Gastrocnemius medialis (tissue), 4 donors: ENCODE measurements at regions of chr1 and their contacts with region 1.

Region 1: DNA sequence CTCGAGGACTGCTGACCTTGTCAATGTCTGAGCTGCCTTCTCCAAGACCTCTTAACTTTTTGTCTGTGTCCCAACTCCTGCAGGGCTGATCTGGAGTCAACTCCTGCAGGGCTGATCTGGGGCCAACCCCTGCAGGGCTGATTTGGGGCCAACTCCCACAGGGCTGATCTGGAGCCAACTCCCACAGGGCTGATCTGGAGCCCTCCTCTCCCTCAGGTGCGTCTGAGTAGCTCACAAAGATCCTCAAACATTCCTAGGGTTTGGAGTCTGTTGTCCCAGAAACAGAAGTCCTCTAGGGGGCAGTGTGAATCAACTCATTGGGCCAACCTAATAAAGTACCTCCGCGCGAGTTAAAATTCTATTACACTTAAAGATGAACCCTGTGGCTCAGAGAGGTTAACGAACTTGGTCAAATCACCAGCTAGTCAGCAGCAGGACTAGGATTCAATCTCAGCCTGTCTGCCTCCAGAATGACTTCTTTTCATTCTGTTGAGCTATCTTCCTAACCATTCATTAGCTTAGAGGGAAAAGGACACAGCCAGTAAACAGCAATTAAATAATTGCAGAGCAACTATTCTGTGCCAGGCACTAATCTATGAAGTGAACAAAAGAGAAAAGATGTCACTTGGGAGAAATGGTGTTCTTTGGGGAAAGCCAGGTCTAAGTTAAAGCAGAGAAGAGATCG is 17.2 kb upstream of the RLF start:
- DNase-seq: peak in 1 of 2 donors; percentile 25
- ATAC-seq: peak; percentile 70 to 77
- H3K4me3 ChIP-seq: no peak overlapping the region
- H3K27ac ChIP-seq: no peak overlapping the region
- H3K4me1 ChIP-seq: no peaks in the 10 kb centered on the region
- H3K27me3 ChIP-seq: peaks cover 0 to 9% (median 0%) of the 10 kb centered on the region in 3 donors
- CTCF ChIP-seq: peak; percentile 59 to 80 (median 64)
- POLR2A ChIP-seq: no peak

Region 2: DNA sequence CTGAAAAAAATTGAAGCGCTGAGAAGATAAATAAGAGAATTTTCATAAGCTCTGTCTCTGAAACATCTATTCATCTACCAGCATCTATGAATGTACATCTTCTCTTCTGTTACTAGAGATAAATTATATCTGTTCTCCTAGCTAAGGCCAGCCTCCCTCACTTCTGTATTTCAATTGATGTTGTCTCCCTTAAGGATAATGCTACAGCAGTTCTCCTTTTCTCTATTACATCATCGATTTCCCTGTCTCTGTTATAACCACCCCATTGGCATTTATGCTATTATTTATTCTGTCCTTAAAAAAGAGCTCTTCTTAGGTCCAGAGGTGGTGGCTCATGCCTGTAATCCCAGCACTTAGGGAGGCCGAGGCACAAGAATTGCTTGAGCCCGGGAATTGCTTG is 60.8 kb after region 1 on chr1:
- in situ Hi-C with region 1: no loop called
- intact Hi-C with region 1: no loop called
- DNase-seq: no peak
- ATAC-seq: no peak
- H3K4me3 ChIP-seq: no peak overlapping the region
- H3K27ac ChIP-seq: no peak overlapping the region
- H3K4me1 ChIP-seq: no peaks in the 10 kb centered on the region
- H3K27me3 ChIP-seq: no peaks in the 10 kb centered on the region
- CTCF ChIP-seq: no peak
- POLR2A ChIP-seq: no peak

Region 3: DNA sequence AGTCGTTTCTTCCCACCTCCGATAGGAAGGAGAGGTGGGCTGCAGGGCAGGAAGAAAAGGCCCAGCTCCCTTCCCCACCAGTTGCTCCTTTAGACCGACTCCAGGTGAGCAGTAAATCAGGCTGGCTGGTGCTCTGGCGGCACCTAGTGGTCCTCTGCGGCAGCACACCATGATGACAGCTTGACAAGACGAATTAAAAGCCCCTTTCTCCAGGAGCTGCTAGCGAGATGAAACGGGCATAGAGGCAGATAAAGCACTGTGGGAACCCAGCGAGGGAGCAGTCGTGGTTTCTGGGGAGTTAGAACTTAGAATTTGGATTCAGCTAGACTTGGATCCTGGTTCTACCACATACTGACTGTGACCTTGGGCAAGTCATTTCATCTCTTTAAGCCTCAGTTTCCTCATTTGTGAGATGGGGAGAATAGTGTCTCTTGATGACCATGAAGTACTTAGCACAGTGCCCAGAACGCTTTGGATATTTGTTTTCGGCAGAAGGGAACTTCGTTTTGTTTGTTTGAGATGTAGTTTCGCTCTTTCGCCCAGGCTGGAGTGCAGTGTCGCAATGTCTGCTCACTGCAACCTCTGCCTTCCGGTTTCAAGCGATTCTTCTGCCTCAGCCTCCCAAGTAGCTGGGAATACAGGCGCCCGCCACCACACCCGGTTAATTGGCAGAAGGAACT is 194.9 kb after region 1 on chr1:
- in situ Hi-C with region 1: loop called in 3 of 4 experiments (anchors 5 to 10 kb)
- intact Hi-C with region 1: loop called (anchors 1 kb)
- DNase-seq: peak; percentile 41 to 74
- ATAC-seq: peak; percentile 62 to 94
- H3K4me3 ChIP-seq: peak overlapping the region in 1 of 4 donors; percentile 22
- H3K27ac ChIP-seq: no peak overlapping the region
- H3K4me1 ChIP-seq: no peaks in the 10 kb centered on the region
- H3K27me3 ChIP-seq: no peaks in the 10 kb centered on the region
- CTCF ChIP-seq: peak; percentile 92 to 98 (median 96)
- POLR2A ChIP-seq: no peak